Thyroid gland (tissue), 4 donors: ENCODE measurements at regions of chr22 and their contacts with region 1.

Region 1: DNA sequence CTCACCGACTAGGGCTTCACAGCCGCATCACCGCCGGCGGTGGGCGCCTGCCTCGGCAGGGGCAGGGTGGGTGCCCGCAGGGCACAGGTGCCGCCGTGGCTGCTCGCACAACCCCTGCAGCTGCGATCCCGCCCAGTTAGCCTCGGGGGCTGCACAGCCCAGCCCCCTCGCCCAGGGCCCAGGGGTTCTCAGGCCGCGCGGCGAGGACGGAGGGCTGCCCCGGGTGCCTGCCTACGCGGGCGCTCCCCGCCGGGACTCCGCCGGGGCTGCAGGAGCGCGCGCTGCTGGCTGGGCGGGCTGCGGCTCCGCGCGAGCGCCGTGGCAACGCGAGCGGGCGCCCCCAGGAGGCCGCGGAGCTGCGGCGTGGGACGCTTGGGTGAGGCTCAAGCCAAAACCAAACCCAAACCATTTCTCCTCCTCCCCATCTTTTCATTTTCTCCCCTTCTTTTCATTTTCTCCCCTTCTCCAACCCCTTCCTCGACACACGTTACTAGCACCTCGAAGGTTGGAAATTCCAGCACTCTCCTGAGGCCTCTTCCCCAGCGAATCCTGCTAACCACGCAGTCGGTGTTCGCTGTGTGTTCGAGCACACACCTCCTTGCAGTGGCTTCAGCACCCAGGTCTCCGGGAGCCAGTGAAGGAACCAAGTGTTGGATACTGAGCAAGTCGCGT is at the start of gene MICAL3:
- DNase-seq: peak; percentile 65 to 69
- H3K4me3 ChIP-seq: peak within 1 kb of the TSS; percentile 28 to 47 (median 43)
- H3K27ac ChIP-seq: peak within 1 kb of the TSS in 2 of 3 donors; percentile 43 to 44
- H3K4me1 ChIP-seq: peaks cover 8 to 17% of the 10 kb centered on the region in 2 donors
- H3K27me3 ChIP-seq: no peaks in the 10 kb centered on the region
- CTCF ChIP-seq: peak in 4 of 6 experiments; percentile 36 to 85 (median 76)
- POLR2A ChIP-seq: peak in 1 of 2 donors; percentile 33
- total RNA-seq, gene MICAL3: 31.8 to 53.8 (median 43.6) TPM

Region 2: GRCh38 chr22:17830043-17830961 is 194.1 kb before region 1 on chr22:
- intact Hi-C with region 1: loop called (anchors 2 kb)
- DNase-seq: peak; percentile 88 to 92
- H3K4me3 ChIP-seq: no peak overlapping the region
- H3K27ac ChIP-seq: peak overlapping the region in 1 of 3 donors; percentile 97
- H3K4me1 ChIP-seq: peaks cover 22 to 48% of the 10 kb centered on the region in 2 donors
- H3K27me3 ChIP-seq: no peaks in the 10 kb centered on the region
- CTCF ChIP-seq: peak; percentile 98 to 100 (median 99)
- POLR2A ChIP-seq: peak in 1 of 2 donors; percentile 13

Region 3: GRCh38 chr22:17950651-17951214 is 73.7 kb before region 1 on chr22:
- intact Hi-C with region 1: no loop called
- DNase-seq: no peak
- H3K4me3 ChIP-seq: no peak overlapping the region
- H3K27ac ChIP-seq: peak overlapping the region in 1 of 3 donors; percentile 30
- H3K4me1 ChIP-seq: peaks cover 21 to 44% of the 10 kb centered on the region in 2 donors
- H3K27me3 ChIP-seq: no peaks in the 10 kb centered on the region
- CTCF ChIP-seq: no peak
- POLR2A ChIP-seq: no peak

Region 4: DNA sequence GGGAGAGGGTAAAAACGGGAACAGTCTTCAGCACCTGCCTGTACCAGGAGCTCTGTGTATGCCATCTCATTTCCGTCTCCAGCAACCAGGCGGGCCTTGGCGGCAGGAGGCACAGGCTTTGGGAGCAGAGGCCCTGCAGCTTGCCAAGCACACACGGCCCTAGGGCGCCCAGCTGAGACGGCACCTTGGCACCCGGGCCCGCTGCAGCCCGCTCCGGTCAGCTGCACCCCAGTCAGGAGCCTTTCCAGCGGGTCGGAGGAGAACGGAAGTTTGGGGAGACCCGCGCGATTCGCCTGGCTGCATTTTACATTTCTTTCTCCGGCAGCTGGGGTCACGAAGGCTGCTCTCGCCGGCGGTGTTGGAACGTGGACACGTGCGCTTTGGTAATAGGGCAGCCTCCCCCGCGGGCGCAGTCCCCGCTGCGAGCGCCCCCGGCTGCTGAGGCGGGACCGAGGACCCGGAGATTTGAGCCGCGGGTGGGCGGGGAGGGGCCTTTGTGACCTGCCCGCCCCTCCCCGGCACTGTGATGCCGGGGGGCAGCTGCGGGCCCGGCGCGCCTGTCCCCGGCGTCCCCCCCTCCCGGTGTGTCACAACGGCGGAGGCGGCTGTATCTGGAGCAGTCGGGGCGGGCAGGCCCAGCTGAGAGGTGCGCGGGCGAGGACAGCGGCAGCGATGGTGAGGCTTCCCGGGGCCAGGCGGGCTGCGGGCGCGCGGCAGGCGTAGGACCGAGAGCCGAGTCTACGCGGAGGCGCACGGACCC is 86.0 kb after region 1 on chr22 and contains the start of gene TUBA8:
- intact Hi-C with region 1: no loop called
- DNase-seq: peak; percentile 91 to 94
- H3K4me3 ChIP-seq: peak within 1 kb of the TSS in 2 of 3 donors; percentile 48
- H3K27ac ChIP-seq: peak within 1 kb of the TSS; percentile 32 to 80 (median 58)
- H3K4me1 ChIP-seq: peaks cover 17 to 21% of the 10 kb centered on the region in 2 donors
- H3K27me3 ChIP-seq: no peaks in the 10 kb centered on the region
- CTCF ChIP-seq: no peak
- POLR2A ChIP-seq: peak in 1 of 2 donors; percentile 39
- total RNA-seq, gene TUBA8: 3.2 to 18.4 (median 12.5) TPM